ENCODE measurements at regions of chr1 and their contacts with region 1.

Region 1: DNA sequence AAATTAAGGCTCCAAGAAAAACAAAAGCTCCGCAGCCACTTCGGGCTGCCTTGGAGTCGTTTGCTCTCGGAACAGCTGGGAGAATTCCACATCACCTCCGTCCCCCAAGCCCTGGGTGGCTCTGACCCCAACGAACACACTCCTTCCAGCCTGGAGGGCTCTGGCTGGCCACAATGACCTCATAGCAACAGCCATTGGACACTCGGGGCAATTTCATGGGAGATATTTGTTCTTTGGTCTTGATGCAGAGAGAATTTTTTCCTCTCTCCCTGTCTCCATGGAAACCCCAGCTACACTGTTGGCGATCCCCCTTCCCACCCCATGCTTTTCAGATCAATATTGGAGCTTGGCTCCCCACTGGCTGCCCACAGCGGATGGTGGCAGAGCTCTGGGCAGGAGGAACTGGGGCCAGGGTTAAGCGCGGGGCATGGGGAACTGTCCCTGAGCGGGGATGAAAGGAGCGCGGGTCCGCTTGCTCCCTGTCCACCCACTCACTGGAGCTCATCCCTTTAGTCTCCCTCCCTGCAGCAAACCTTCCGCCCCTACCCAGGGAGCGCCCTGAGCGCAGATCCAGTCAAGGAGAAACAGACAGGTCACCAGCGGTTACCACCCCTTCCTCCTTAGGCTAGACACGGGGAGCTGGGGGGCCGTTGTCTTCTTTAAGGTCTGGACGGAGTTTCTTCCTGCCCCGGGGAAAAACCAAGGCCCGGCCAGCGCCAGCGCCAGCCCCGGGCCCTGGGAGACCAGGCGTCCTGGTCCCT is 1.2 kb downstream of the WNT4 start:
- DNase-seq: no peak
- H3K4me3 ChIP-seq: peak overlapping the region; percentile 46 to 60
- H3K27ac ChIP-seq: no peak overlapping the region
- H3K4me1 ChIP-seq: peaks cover 0 to 25% (median 15%) of the 10 kb centered on the region in 4 donors
- H3K27me3 ChIP-seq: peaks cover 0 to 34% of the 10 kb centered on the region in 2 donors
- CTCF ChIP-seq: no peak

Region 2: DNA sequence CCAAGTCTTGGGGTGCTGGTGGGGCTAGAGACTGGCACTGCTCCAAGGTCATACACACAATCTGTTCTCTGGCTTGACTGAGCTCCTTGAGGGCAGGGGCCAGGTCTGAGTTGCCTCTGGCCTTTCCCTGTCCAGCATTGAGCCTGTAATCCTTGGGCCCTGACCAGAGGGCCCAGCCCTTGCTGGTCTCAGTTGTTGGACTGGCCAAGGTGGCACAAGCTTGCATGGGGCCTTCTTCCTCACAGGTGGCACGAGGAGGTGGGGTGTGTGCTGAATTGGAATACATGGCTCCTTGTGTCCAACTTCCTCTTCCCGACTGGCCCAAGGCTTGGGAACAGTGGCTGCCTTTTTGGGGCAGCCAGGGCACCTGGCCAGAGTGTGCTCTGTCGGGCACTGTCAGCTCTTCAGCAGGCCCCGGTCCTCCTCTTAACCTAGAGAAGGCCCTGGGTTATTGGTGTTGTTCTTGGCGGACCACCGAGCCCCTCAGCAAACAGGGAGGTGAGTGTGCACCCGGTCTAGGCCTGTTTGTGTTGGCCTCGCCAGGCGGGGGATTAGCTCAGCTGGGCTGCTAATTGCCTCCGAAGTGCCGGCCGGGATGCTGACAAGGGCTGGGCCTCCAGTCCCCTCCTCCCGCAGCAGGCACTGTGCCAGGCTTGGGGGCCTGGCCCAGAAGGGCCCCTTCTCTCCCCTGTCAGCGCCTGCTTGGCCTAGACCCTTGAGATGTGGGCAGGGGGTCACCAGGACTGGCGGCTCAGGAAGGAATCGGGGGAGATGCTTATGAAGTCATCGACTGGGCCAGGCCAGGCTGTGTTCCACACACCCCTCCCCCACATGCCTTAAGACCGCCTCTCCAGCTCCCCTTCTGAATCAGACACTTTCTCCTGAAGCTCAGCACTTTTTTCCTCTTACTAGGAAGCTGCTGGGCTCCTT is 27.4 kb before region 1 on chr1:
- intact Hi-C with region 1: loop called (anchors 1 kb)
- DNase-seq: no peak
- H3K4me3 ChIP-seq: no peak overlapping the region
- H3K27ac ChIP-seq: no peak overlapping the region
- H3K4me1 ChIP-seq: peaks cover 0 to 30% (median 16%) of the 10 kb centered on the region in 4 donors
- H3K27me3 ChIP-seq: no peaks in the 10 kb centered on the region
- CTCF ChIP-seq: no peak

Region 3: GRCh38 chr1:22184892-22185612 is 43.3 kb after region 1 on chr1:
- intact Hi-C with region 1: no loop called
- DNase-seq: no peak
- H3K4me3 ChIP-seq: no peak overlapping the region
- H3K27ac ChIP-seq: no peak overlapping the region
- H3K4me1 ChIP-seq: no peaks in the 10 kb centered on the region
- H3K27me3 ChIP-seq: peaks cover 0 to 56% of the 10 kb centered on the region in 2 donors
- CTCF ChIP-seq: no peak

Region 4: GRCh38 chr1:22341791-22342605 is 200.3 kb after region 1 on chr1:
- intact Hi-C with region 1: no loop called
- DNase-seq: no peak
- H3K4me3 ChIP-seq: no peak overlapping the region
- H3K27ac ChIP-seq: no peak overlapping the region
- H3K4me1 ChIP-seq: peaks cover 0 to 5% (median 3%) of the 10 kb centered on the region in 4 donors
- H3K27me3 ChIP-seq: peaks cover 0 to 86% of the 10 kb centered on the region in 2 donors
- CTCF ChIP-seq: no peak

Measured in tibial artery (tissue), 4 donors.